HCT116 (cell line): ENCODE measurements at regions of chr3 and their contacts with region 1.

Region 1: DNA sequence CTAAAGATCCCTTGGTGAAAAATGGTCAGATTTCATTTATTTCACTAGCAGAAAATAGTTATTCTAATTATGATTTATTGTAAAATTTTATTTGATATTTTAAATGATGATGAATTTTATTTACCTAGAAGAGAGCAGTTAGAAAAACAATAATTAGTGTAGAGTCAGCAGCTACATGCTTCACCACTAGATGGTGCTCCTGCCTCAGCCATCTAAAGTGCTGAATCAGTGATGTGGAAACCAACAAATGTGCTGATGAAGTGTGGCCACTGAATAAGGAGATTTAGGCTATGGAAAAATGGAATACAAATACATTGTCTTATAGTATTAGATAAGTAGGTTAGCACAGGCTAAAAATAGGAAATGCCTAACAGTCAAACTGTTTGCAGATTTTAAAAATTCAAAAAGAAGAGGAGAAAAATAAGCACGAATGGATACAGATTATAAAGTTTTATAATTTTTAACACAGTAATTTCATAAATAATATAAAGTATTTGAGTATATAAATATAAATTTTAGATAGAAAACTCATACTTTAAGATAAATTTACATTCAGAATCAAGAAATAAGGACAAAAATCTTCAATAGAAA is 109.8 kb downstream of the PPP2R3A start:
- DNase-seq: peak; percentile 51
- ATAC-seq: peak; percentile 64; the same call in 1 of the 2 replicates
- H3K4me3 ChIP-seq: no peak overlapping the region
- H3K27ac ChIP-seq: no peak overlapping the region
- H3K4me1 ChIP-seq: peaks cover 7 to 13% of the 10 kb centered on the region in 2 experiments
- H3K27me3 ChIP-seq: no peaks in the 10 kb centered on the region
- CTCF ChIP-seq: peak; percentile 83 to 91 (median 87); a peak in 5 of 6 replicates
- POLR2A ChIP-seq: no peak
- RAD21 ChIP-seq: peak; percentile 97

Region 2: DNA sequence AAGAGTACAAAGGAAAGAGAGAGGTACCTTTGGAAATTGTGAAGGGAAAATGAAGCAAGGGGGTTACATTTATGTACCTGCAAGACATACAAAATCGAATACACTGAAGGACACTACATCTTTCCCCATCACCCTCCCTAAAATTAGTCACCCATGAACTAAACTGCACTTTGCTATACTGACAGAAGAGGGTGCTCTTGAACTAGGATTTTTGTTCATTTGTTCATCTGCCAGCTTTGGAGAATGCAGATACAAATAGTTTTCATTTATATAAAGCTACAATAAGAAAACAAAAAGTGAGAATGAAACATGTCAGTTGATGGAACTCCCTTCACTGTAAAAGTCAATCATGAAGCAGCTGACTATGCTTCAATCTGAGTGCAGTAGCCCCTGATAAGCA is 230.6 kb after region 1 on chr3:
- CTCF ChIA-PET with region 1: interaction called, 4 read pairs
- POLR2A ChIA-PET with region 1: no interaction called
- RAD21 ChIA-PET with region 1: no interaction called
- intact Hi-C with region 1: loop called (anchors 5 kb)
- DNase-seq: peak; percentile 32
- ATAC-seq: peak; percentile 74
- H3K4me3 ChIP-seq: no peak overlapping the region
- H3K27ac ChIP-seq: no peak overlapping the region
- H3K4me1 ChIP-seq: no peaks in the 10 kb centered on the region
- H3K27me3 ChIP-seq: no peaks in the 10 kb centered on the region
- CTCF ChIP-seq: peak; percentile 62 to 76 (median 75); a peak in 5 of 6 replicates
- POLR2A ChIP-seq: no peak
- RAD21 ChIP-seq: peak; percentile 79

Region 3: DNA sequence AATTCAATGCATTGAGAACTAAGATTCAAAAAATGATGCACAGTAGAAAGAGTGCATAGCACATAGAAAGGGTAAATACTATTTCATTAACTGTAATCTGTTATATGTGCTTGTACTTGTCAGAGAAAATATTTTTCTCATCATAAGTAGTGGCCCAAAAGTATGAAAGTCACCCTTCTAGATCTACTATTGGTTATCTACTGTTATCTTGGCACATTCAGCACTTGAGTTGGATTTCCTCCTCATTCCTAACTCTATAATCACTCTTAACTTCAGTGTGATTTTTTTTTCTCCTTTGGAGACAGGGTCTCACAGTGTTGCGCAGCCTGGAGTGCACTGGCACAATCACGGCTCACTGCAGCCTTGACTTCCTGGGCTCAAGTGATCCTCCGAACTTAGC is 369.3 kb after region 1 on chr3:
- CTCF ChIA-PET with region 1: no interaction called
- POLR2A ChIA-PET with region 1: no interaction called
- RAD21 ChIA-PET with region 1: no interaction called
- intact Hi-C with region 1: no loop called
- DNase-seq: no peak
- ATAC-seq: no peak
- H3K4me3 ChIP-seq: no peak overlapping the region
- H3K27ac ChIP-seq: no peak overlapping the region
- H3K4me1 ChIP-seq: no peaks in the 10 kb centered on the region
- H3K27me3 ChIP-seq: no peaks in the 10 kb centered on the region
- CTCF ChIP-seq: no peak
- POLR2A ChIP-seq: no peak
- RAD21 ChIP-seq: no peak

Region 4: GRCh38 chr3:137013955-137014688 is 938.8 kb after region 1 on chr3:
- CTCF ChIA-PET with region 1: interaction called, 20 read pairs
- POLR2A ChIA-PET with region 1: no interaction called
- RAD21 ChIA-PET with region 1: interaction called, 4 read pairs
- intact Hi-C with region 1: loop called (anchors 1 kb)
- DNase-seq: peak; percentile 63
- ATAC-seq: peak; percentile 93
- H3K4me3 ChIP-seq: no peak overlapping the region
- H3K27ac ChIP-seq: no peak overlapping the region
- H3K4me1 ChIP-seq: peaks cover 0 to 6% of the 10 kb centered on the region in 2 experiments; a peak in 1 of 4 replicates
- H3K27me3 ChIP-seq: no peaks in the 10 kb centered on the region
- CTCF ChIP-seq: peak; percentile 72 to 90 (median 87)
- POLR2A ChIP-seq: no peak
- RAD21 ChIP-seq: peak; percentile 99

Region 5: GRCh38 chr3:137692803-137693431 is 1617.6 kb after region 1 on chr3:
- CTCF ChIA-PET with region 1: no interaction called
- POLR2A ChIA-PET with region 1: no interaction called
- RAD21 ChIA-PET with region 1: no interaction called
- intact Hi-C with region 1: loop called (anchors 10 kb)
- DNase-seq: peak; percentile 13
- ATAC-seq: peak; percentile 92
- H3K4me3 ChIP-seq: no peak overlapping the region
- H3K27ac ChIP-seq: no peak overlapping the region
- H3K4me1 ChIP-seq: no peaks in the 10 kb centered on the region
- H3K27me3 ChIP-seq: peaks cover 22% of the 10 kb centered on the region
- CTCF ChIP-seq: peak; percentile 41 to 83 (median 81); a peak in 5 of 6 replicates
- POLR2A ChIP-seq: no peak
- RAD21 ChIP-seq: peak; percentile 78

Region 6: DNA sequence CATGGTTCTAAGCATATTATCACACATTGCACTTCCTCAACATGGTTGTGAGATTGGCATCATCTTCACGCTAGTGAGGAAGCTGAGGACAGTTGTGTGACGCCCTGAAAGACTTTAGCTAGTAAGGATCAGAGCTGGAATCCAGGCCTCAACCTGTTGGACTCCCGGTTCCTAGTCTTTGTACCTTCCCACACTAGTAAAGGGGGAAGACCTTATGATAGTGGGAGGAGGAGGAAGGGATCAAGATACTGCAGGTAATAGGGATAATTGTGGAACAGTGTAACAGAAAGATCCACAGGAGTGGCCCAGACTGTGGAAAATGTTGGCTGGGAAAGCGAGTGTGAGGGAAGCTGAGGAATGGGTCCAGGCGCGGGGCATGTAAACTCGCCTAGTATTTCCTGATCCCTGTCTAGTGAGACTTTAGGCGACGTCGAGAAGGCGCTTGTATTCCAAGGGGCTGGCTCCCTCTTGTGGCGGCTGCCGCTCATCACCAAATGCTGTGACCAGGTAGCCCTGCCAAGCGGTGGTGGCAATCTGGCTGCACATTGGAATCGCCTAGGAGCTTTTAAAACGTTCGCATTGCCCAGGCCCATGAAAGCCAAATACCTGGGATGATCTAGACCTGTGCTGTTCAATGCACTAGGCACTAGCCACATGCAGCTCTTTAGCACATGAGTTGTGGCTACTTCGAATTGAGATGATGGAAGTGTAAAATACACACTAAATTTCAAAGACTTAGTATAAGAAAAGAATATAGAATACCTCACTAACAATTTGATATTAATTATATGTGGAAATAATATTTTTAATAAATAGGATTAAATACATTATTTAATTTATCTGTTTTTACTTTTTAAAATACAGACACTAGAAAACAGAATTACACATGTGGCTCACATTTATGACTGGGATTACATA is 1895.9 kb after region 1 on chr3:
- CTCF ChIA-PET with region 1: no interaction called
- POLR2A ChIA-PET with region 1: no interaction called
- RAD21 ChIA-PET with region 1: no interaction called
- intact Hi-C with region 1: loop called (anchors 10 kb)
- DNase-seq: peak; percentile 65
- ATAC-seq: peak; percentile 99
- H3K4me3 ChIP-seq: peak overlapping the region in 1 of 2 experiments; percentile 36; a peak in 2 of 4 replicates
- H3K27ac ChIP-seq: no peak overlapping the region
- H3K4me1 ChIP-seq: peaks cover 3 to 4% of the 10 kb centered on the region in 2 experiments; a peak in 2 of 4 replicates
- H3K27me3 ChIP-seq: no peaks in the 10 kb centered on the region; the same call in 1 of the 2 replicates
- CTCF ChIP-seq: peak; percentile 69 to 95 (median 93)
- POLR2A ChIP-seq: no peak
- RAD21 ChIP-seq: peak; percentile 84